ENCODE measurements at regions of chr7 and their contacts with region 1.

Region 1: DNA sequence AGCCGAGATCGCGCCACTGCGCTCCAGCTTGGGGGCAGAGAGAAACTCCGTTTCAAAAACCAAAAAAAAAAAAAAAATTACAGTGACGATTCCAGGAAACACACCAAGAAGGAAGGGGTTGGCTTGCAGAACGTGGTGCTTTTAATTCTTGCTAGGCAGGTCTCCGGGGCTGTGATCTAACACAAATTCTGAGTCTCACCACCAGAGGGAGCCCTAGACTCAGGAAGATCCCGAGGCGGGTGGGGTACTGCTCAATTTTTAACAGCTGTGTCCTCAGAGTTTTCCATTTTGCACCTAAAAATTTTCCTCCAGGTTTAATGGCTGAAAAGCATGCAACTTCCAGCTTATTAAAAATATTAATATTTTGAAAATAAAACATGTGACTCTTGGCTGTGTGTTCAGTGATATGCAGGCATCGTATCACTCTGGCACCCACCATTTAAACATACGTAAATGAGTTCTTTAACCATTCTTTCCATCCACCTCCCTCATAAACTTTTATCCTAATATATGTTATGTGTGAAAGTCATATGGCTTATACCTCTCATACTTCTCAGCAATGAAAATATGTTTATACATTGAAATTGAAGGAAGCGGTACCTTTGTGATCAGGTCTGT is 26.5 kb upstream of the NUB1 start:
- DNase-seq: peak; percentile 48 to 87 (median 82)
- ATAC-seq: peak; percentile 96
- H3K4me3 ChIP-seq: no peak overlapping the region
- H3K4me3 Mint-ChIP-seq: peak overlapping the region in 8 of 10 donors; percentile 1 to 80 (median 56)
- H3K27ac ChIP-seq: no peak overlapping the region
- H3K27ac Mint-ChIP-seq: peak overlapping the region in 6 of 9 donors; percentile 33 to 81 (median 58)
- H3K4me1 ChIP-seq: no peaks in the 10 kb centered on the region
- H3K4me1 Mint-ChIP-seq: peaks cover 0 to 11% (median 5%) of the 10 kb centered on the region in 7 donors
- H3K27me3 ChIP-seq: no peaks in the 10 kb centered on the region
- H3K27me3 Mint-ChIP-seq: no peaks in the 10 kb centered on the region

Region 2: GRCh38 chr7:151341357-151342101 is 26.4 kb after region 1 on chr7 and contains the start of gene NUB1:
- CTCF ChIA-PET with region 1: interaction called, 13 read pairs
- POLR2A ChIA-PET with region 1: interaction called, 4 read pairs
- intact Hi-C with region 1: loop called in 1 of 2 experiments (anchors 1 kb)
- DNase-seq: peak; percentile 79 to 99 (median 90)
- ATAC-seq: peak; percentile 98
- H3K4me3 ChIP-seq: peak within 1 kb of the TSS; percentile 84
- H3K4me3 Mint-ChIP-seq: peak within 1 kb of the TSS; percentile 84 to 91 (median 87)
- H3K27ac ChIP-seq: peak within 1 kb of the TSS; percentile 88
- H3K27ac Mint-ChIP-seq: peak within 1 kb of the TSS; percentile 83 to 96 (median 90)
- H3K4me1 ChIP-seq: peaks cover 19 to 21% of the 10 kb centered on the region in 2 donors
- H3K4me1 Mint-ChIP-seq: peaks cover 10 to 44% (median 33%) of the 10 kb centered on the region in 7 donors
- H3K27me3 ChIP-seq: no peaks in the 10 kb centered on the region
- H3K27me3 Mint-ChIP-seq: no peaks in the 10 kb centered on the region
- total RNA-seq, gene NUB1: 75.1 to 116 (median 82.0) TPM

Region 3: DNA sequence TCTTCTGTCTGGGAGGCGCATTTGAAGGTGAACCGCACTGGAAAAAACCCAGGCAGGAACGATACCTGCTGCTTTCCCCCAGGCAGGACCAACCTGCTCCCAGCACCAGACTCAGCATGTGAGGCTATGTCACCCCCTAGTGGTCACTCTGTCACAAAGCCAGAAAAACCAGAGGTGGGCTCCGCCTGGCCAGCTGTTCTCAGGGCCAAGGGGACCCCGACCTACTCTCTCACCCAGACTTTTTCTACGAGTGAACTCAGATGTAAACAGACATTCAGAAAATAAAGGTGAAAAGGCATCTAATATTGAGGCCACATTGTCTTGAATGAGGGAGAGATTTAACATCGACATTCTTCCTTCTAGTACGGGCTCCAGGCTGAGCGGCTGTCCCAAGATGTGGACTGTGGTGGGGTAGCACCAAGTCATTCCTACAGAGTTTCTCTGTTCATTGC is 444.5 kb after region 1 on chr7:
- CTCF ChIA-PET with region 1: no interaction called
- POLR2A ChIA-PET with region 1: no interaction called
- intact Hi-C with region 1: loop called (anchors 1 to 5 kb)
- DNase-seq: peak in 8 of 9 donors; percentile 38 to 67 (median 58)
- ATAC-seq: peak; percentile 67
- H3K4me3 ChIP-seq: no peak overlapping the region
- H3K4me3 Mint-ChIP-seq: no peak overlapping the region
- H3K27ac ChIP-seq: no peak overlapping the region
- H3K27ac Mint-ChIP-seq: peak overlapping the region in 6 of 9 donors; percentile 8 to 83 (median 56)
- H3K4me1 ChIP-seq: peaks cover 12 to 22% of the 10 kb centered on the region in 2 donors
- H3K4me1 Mint-ChIP-seq: peaks cover 17 to 60% (median 33%) of the 10 kb centered on the region in 7 donors
- H3K27me3 ChIP-seq: no peaks in the 10 kb centered on the region
- H3K27me3 Mint-ChIP-seq: no peaks in the 10 kb centered on the region

Measured in naive thymus-derived CD4-positive, alpha-beta T cell (primary cell).